Activated T-helper 1 cell treated with anti-CD3 and anti-CD28 coated beads, Interleukin-12 subunit alpha, Interleukin-12 subunit beta, Interleukin-2, Interleukin-4 antibody, amounts not matched to agents 30 ng/mL and 10 ng/mL and 1 ng/mL, durations not matched to agents 14 hours and 24 hours and 36 hours (primary cell): ENCODE measurements at regions of chr4 and their contacts with region 1.

Region 1: GRCh38 chr4:146243141-146243882 is 29.0 kb downstream of the REELD1 start:
- DNase-seq: peak; percentile 16
- H3K4me3 Mint-ChIP-seq: peak overlapping the region; percentile 16
- H3K27ac Mint-ChIP-seq: peak overlapping the region; percentile 84
- H3K4me1 Mint-ChIP-seq: peaks cover 35% of the 10 kb centered on the region
- H3K27me3 Mint-ChIP-seq: peaks cover 5% of the 10 kb centered on the region

Region 2: DNA sequence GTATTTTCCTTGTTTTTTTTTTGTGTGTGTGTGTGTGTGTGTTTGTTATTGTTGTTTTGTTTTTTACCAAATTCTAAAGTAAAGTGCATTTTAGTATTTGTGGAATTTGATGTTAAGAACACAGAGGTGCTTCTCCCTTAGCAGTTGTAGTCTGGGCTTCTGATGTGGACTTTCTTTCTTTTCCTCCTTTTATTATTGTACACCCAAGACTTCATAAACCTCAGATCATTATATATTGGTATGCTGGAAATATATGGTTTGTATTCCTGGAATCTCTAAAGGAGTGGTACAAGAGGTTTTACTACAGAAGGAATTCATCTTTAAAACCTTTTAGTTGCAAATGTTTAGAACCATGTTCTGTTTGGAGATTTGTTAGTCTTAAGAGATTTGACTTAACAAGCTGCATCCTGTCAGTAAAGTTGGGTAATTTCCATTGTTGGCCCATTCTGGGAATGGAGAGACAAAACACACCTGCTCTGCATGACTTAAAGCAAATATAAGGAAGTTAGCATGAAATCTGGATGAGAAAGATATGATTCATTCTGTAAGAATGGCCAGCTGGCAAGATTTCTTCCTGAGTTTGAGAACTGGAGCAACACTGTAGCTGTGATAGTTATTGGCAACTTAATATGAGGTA is 697.7 kb before region 1 on chr4:
- intact Hi-C with region 1: no loop called
- DNase-seq: no peak
- H3K4me3 Mint-ChIP-seq: no peak overlapping the region
- H3K27ac Mint-ChIP-seq: no peak overlapping the region
- H3K4me1 Mint-ChIP-seq: peaks cover 6% of the 10 kb centered on the region
- H3K27me3 Mint-ChIP-seq: peaks cover 13% of the 10 kb centered on the region

Region 3: GRCh38 chr4:146029939-146030710 is 213.2 kb before region 1 on chr4:
- intact Hi-C with region 1: loop called (anchors 1 kb)
- DNase-seq: no peak
- H3K4me3 Mint-ChIP-seq: no peak overlapping the region
- H3K27ac Mint-ChIP-seq: no peak overlapping the region
- H3K4me1 Mint-ChIP-seq: peaks cover 12% of the 10 kb centered on the region
- H3K27me3 Mint-ChIP-seq: peaks cover 10% of the 10 kb centered on the region

Region 4: DNA sequence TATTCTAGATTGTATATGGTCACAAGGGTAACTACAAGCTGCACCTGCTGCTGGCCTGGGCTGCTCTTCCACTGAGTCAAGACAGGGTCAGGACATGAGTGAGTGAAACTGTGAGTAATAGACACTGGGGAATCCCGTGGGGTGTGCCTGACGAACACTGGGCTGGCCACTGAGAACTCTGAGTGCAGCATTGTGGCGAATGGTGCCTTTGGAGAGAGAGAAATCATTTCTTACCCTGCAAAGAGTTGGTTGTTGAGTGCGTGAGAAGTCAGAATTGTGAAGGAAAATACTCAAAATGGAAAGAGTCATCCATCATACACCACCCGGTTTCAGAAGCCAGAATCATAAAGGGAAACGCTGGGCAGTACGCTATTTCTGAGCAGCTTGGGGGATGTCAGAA is 110.9 kb before region 1 on chr4:
- intact Hi-C with region 1: loop called (anchors 1 kb)
- DNase-seq: peak; percentile 28
- H3K4me3 Mint-ChIP-seq: no peak overlapping the region
- H3K27ac Mint-ChIP-seq: peak overlapping the region; percentile 61
- H3K4me1 Mint-ChIP-seq: peaks cover 20% of the 10 kb centered on the region
- H3K27me3 Mint-ChIP-seq: peaks cover 8% of the 10 kb centered on the region

Region 5: GRCh38 chr4:146333187-146333894 is 90.0 kb after region 1 on chr4:
- intact Hi-C with region 1: loop called (anchors 2 kb)
- DNase-seq: peak; percentile 1
- H3K4me3 Mint-ChIP-seq: no peak overlapping the region
- H3K27ac Mint-ChIP-seq: no peak overlapping the region
- H3K4me1 Mint-ChIP-seq: no peaks in the 10 kb centered on the region
- H3K27me3 Mint-ChIP-seq: no peaks in the 10 kb centered on the region

Region 6: DNA sequence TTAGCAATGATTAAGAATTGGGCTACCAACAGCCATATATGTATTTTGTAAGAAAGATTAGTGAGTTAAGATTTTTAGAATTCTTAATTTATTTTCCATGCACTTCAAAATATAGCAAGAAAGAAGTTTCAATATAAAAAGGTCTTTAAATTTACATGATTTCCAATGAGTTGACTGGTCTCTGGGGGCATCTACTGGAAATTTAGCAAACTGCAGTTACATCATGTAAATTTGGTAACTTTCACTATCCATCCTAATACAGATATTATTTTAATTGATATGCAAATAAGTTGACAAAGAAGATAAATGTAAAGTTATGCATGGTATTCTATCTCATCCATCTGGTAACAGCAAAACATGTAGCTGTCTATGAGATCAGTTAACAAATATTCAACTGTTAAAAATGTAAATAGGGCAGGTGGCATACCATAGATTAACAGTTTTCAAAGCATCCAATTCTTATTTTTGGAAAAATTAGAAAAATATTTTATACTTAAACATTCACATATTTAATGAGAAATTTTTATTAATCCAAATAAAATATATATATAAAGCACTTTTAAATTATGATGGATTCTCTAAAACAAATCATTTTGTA is 673.3 kb after region 1 on chr4:
- intact Hi-C with region 1: loop called (anchors 1 kb)
- DNase-seq: no peak
- H3K4me3 Mint-ChIP-seq: no peak overlapping the region
- H3K27ac Mint-ChIP-seq: no peak overlapping the region
- H3K4me1 Mint-ChIP-seq: no peaks in the 10 kb centered on the region
- H3K27me3 Mint-ChIP-seq: peaks cover 4% of the 10 kb centered on the region

Region 7: DNA sequence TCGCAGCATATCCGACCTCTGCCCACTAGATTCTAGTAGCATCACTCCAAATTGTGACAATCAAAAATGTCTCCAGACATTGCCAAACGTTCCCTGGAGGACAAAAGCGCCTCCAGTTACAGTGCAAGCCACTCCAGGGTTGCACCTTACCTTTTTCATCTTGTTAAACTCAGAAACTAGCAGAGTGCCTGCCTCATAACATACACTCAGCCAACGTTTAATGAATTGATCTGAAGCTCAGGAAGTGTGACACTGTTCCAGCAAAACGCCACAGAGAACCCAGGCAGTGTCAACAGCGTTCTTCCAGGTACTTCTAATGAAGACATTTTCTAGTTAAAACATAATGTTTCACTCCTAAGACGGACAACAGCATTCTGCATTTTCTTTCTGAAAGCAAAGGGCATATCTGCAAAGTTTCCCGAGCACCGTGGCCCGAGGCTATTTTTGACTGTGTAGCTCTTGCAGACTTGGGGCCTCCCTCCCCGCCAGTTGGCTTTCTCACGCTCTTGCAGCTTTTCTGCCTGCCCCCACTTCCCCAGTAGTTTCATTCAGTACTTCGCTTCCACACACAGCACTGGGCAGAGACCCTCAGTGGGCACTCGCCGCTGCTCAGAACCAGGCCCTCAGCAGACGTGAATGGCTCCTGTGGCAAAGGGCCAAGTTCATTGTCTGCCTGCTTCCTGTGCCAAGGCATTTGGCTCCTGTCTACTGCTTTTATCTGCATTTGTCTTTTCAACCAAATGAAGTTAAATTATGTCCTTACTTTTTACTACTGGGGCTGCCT is 835.8 kb after region 1 on chr4:
- intact Hi-C with region 1: no loop called
- DNase-seq: no peak
- H3K4me3 Mint-ChIP-seq: no peak overlapping the region
- H3K27ac Mint-ChIP-seq: no peak overlapping the region
- H3K4me1 Mint-ChIP-seq: no peaks in the 10 kb centered on the region
- H3K27me3 Mint-ChIP-seq: peaks cover 2% of the 10 kb centered on the region